CD4-positive, alpha-beta T cell (primary cell): ENCODE measurements at regions of chr3 and their contacts with region 1.

Region 1: GRCh38 chr3:153291056-153291685 is 129.1 kb downstream of the RAP2B start:
- DNase-seq: peak in 4 of 14 experiments; percentile 31 to 68 (median 56)
- ATAC-seq: no peak
- H3K4me3 ChIP-seq: no peak overlapping the region
- H3K4me3 Mint-ChIP-seq: no peak overlapping the region
- H3K27ac ChIP-seq: no peak overlapping the region
- H3K27ac Mint-ChIP-seq: no peak overlapping the region
- H3K4me1 ChIP-seq: peaks cover under 1% of the 10 kb centered on the region
- H3K4me1 Mint-ChIP-seq: peaks cover 46% of the 10 kb centered on the region
- H3K27me3 ChIP-seq: no peaks in the 10 kb centered on the region
- H3K27me3 Mint-ChIP-seq: no peaks in the 10 kb centered on the region
- CTCF ChIP-seq: peak; percentile 15

Region 2: DNA sequence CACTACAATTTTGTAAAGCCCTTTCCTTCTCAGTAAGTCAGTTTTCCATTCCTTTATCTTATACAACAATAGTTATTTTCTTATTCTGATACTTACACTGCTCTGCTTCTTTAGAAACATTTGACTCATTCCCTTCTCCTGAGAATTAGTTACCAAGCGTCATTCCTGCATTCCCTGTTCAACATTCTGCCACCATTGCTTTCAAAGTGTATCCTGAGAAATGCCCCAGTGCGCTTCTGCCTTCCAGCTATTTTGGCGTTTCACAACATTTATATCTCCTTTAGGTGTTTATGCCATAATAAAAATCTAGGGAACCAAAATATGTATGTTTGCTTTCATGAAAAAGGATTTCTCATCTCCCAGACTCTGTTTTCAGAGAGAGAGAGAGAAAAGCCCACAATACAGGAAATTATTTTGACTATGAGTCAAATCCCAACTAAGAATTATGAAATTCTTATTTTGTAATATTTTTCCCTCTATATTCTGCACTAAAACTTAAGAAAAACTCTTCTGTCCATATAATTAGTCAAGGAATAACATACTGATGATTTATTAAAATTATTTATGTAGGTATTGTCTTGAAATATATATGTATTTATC is 247.3 kb before region 1 on chr3:
- CTCF ChIA-PET with region 1: interaction called, 7 read pairs
- POLR2A ChIA-PET with region 1: interaction called, 6 read pairs
- intact Hi-C with region 1: loop called (anchors 1 to 2 kb)
- DNase-seq: no peak
- ATAC-seq: no peak
- H3K4me3 ChIP-seq: no peak overlapping the region
- H3K4me3 Mint-ChIP-seq: no peak overlapping the region
- H3K27ac ChIP-seq: no peak overlapping the region
- H3K27ac Mint-ChIP-seq: no peak overlapping the region
- H3K4me1 ChIP-seq: no peaks in the 10 kb centered on the region
- H3K4me1 Mint-ChIP-seq: peaks cover 5% of the 10 kb centered on the region
- H3K27me3 ChIP-seq: no peaks in the 10 kb centered on the region
- H3K27me3 Mint-ChIP-seq: no peaks in the 10 kb centered on the region
- CTCF ChIP-seq: no peak

Region 3: DNA sequence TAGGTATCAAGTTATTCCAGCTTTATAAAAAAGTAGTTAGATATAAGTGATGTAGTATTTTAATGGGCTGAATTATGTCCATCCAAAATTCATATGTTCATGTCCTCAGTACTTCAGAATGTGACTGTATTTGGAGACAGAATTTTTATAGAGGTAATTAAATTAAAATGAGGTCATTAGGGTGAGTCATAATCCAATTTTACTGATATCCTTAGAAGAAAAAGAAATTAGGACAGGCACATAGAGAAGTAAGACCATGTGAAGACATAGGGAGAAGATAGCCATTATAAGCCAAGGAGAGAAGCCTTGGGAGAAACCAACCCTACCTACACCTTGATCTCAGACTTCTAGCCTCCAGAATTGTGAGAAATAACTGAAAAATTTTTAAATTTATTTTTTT is 98.8 kb before region 1 on chr3:
- CTCF ChIA-PET with region 1: no interaction called
- POLR2A ChIA-PET with region 1: no interaction called
- intact Hi-C with region 1: no loop called
- DNase-seq: no peak
- ATAC-seq: no peak
- H3K4me3 ChIP-seq: no peak overlapping the region
- H3K4me3 Mint-ChIP-seq: no peak overlapping the region
- H3K27ac ChIP-seq: no peak overlapping the region
- H3K27ac Mint-ChIP-seq: no peak overlapping the region
- H3K4me1 ChIP-seq: no peaks in the 10 kb centered on the region
- H3K4me1 Mint-ChIP-seq: peaks cover 3% of the 10 kb centered on the region
- H3K27me3 ChIP-seq: no peaks in the 10 kb centered on the region
- H3K27me3 Mint-ChIP-seq: no peaks in the 10 kb centered on the region
- CTCF ChIP-seq: no peak

Region 4: DNA sequence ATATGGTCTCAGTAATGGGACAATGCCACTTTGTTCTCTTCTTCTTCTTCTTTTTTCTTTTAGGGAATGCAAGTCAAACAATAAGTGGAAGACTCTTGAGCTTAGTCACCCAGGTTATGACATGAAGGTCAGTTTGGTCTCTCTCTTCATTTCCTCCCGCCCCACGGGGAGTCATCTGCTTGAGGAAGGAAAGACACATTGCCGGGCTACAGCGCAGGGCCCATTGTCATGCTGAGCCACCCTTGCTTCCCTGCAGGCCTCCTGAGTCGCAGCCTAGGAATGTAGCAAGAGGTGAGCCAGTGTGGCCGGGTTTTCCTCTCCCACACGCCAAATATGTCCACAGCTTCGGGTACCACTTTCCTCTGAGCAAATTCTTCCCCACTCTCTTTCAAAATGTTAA is 81.6 kb before region 1 on chr3:
- CTCF ChIA-PET with region 1: interaction called, 10 read pairs
- POLR2A ChIA-PET with region 1: interaction called, 7 read pairs
- intact Hi-C with region 1: loop called in 1 of 2 experiments (anchors 1 kb)
- DNase-seq: peak in 2 of 14 experiments; percentile 62 to 69
- ATAC-seq: no peak
- H3K4me3 ChIP-seq: peak overlapping the region; percentile 11
- H3K4me3 Mint-ChIP-seq: no peak overlapping the region
- H3K27ac ChIP-seq: no peak overlapping the region
- H3K27ac Mint-ChIP-seq: peak overlapping the region; percentile 26
- H3K4me1 ChIP-seq: peaks cover 15% of the 10 kb centered on the region
- H3K4me1 Mint-ChIP-seq: peaks cover 40% of the 10 kb centered on the region
- H3K27me3 ChIP-seq: no peaks in the 10 kb centered on the region
- H3K27me3 Mint-ChIP-seq: no peaks in the 10 kb centered on the region
- CTCF ChIP-seq: no peak

Region 5: GRCh38 chr3:153221748-153222162 is 69.4 kb before region 1 on chr3:
- CTCF ChIA-PET with region 1: interaction called, 23 read pairs
- POLR2A ChIA-PET with region 1: interaction called, 8 read pairs
- intact Hi-C with region 1: loop called in 1 of 2 experiments (anchors 5 kb)
- DNase-seq: peak; percentile 63 to 95 (median 75)
- ATAC-seq: peak; percentile 92
- H3K4me3 ChIP-seq: peak overlapping the region; percentile 10
- H3K4me3 Mint-ChIP-seq: peak overlapping the region; percentile 72
- H3K27ac ChIP-seq: peak overlapping the region; percentile 78 to 84
- H3K27ac Mint-ChIP-seq: peak overlapping the region; percentile 91
- H3K4me1 ChIP-seq: peaks cover 53% of the 10 kb centered on the region
- H3K4me1 Mint-ChIP-seq: peaks cover 68% of the 10 kb centered on the region
- H3K27me3 ChIP-seq: no peaks in the 10 kb centered on the region
- H3K27me3 Mint-ChIP-seq: no peaks in the 10 kb centered on the region
- CTCF ChIP-seq: no peak

Region 6: DNA sequence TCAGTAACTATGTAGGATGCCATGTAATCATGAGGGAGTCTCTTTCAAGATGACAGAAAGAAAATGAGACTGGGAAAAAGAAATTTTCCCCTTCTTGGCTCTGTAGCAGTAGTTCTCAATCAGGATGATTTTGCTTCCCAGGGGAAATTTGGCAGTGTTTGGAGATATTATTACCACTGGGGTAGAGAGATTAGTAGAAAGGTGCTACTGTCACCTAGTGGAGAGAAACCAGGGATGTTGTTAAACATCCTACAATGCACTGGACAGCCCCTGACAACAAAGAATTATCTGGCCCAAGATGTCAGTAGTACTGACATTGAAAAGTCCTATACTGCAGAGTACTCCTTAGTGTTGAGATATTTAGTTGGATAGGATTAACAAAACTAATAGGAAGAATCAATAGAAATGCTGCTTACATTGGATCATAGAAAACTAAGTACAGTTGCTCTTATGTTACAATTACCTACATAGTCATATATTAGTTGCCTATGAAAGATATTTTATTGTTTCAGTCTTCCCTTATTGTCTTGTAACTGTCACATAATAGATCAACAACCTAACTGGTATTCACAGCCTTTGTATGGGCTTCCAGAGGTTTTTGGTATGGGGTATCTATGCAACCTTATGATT is 304.1 kb after region 1 on chr3:
- CTCF ChIA-PET with region 1: no interaction called
- POLR2A ChIA-PET with region 1: no interaction called
- intact Hi-C with region 1: loop called in 1 of 2 experiments (anchors 5 kb)
- DNase-seq: peak in 3 of 14 experiments; percentile 35 to 40 (median 38)
- ATAC-seq: no peak
- H3K4me3 ChIP-seq: no peak overlapping the region
- H3K4me3 Mint-ChIP-seq: no peak overlapping the region
- H3K27ac ChIP-seq: no peak overlapping the region
- H3K27ac Mint-ChIP-seq: no peak overlapping the region
- H3K4me1 ChIP-seq: no peaks in the 10 kb centered on the region
- H3K4me1 Mint-ChIP-seq: peaks cover 10% of the 10 kb centered on the region
- H3K27me3 ChIP-seq: no peaks in the 10 kb centered on the region
- H3K27me3 Mint-ChIP-seq: no peaks in the 10 kb centered on the region
- CTCF ChIP-seq: peak; percentile 65

Region 7: DNA sequence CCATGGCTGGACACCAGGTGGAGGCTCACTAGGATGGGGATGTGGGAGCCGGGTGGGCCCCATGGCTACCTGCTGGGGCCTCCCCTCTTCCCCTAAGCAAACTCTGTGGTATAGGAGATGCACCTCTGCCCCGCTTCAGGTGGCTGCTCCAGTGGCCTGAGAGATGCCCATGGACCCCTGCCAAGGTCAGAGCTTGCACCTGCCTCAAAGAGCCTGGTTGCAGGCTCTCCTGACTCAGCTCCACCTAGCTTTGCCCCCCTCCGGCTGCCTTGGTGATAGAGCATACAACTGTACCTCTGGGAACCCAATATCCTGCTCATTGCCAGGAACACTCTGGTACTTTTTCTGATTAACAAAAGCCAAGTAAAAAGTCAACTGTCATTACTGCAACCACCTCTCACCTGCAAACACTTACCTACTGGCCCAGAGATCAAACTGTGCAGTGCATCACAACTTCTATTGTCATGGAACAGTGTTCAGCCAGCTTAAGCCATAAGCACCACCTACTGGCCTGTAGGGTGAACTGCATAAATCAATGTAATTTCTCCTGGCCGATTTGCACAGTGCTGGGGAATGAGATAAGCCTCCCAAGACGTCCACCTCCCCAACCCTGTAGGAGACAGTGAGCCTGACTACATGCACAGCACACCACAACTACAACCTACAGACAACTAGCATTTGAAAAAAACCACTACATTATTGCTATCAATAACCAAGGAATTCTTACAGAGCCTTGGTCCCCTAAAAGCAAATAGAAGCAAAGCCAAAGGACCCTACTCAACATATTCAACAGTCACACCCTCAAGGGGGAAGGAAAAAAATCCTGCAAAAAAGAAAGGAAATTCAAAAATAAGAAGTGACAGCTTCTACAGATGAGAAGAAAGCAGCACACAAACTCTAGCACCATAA is 477.6 kb after region 1 on chr3:
- CTCF ChIA-PET with region 1: interaction called, 6 read pairs
- POLR2A ChIA-PET with region 1: no interaction called
- intact Hi-C with region 1: loop called in 1 of 2 experiments (anchors 2 kb)
- DNase-seq: peak; percentile 9 to 77 (median 34)
- ATAC-seq: peak; percentile 98
- H3K4me3 ChIP-seq: no peak overlapping the region
- H3K4me3 Mint-ChIP-seq: no peak overlapping the region
- H3K27ac ChIP-seq: no peak overlapping the region
- H3K27ac Mint-ChIP-seq: no peak overlapping the region
- H3K4me1 ChIP-seq: peaks cover 5% of the 10 kb centered on the region
- H3K4me1 Mint-ChIP-seq: no peaks in the 10 kb centered on the region
- H3K27me3 ChIP-seq: no peaks in the 10 kb centered on the region
- H3K27me3 Mint-ChIP-seq: peaks cover 9% of the 10 kb centered on the region
- CTCF ChIP-seq: peak; percentile 89